Heart right ventricle (tissue), 16 donors: ENCODE measurements at regions of chr13 and their contacts with region 1.

Region 1: DNA sequence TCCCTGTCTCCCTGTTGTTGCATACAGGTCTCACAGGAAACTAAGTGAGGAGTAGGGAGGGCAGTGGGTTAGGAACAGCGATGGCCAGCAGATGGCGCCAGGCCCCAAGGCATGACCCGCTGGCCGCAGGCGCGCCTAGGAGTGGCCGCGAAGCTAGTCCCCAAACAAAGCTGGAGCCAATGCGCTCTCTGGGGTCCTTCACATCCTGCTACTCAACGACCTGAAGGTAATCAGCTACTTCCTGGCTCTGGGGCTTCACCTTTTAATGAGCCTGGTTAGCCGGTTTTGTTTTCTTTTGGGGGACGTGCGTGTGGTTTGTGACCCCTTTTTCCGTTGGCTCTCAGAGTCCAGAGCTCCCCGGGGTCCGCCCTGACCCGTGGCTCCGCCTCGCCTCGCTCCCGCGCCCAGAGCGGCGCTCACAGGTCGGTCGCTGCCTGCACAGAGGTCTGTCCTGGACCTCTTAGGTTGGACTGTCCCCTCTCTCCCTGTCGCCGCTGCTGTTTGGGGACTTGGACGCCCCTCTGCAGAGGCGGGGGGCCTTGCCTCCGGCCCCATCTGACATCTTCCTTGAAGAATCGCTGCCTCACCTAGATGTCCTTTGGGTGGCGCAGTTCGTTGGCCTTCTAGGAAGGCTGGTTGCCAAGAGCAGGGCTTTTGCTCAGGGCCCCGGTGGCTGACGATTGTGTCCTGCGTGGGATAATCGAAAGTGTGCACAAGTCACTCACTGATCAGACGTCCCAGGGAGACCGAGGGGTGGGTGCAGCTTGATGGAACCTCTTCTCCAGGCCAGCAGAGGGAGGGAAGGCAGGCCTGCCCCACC is 62.1 kb upstream of the GTF3A start:
- DNase-seq: peak; percentile 82 to 88
- ATAC-seq: peak; percentile 92 to 97 (median 95)
- H3K4me3 ChIP-seq: peak overlapping the region; percentile 29 to 61 (median 51)
- H3K27ac ChIP-seq: no peak overlapping the region
- H3K4me1 ChIP-seq: peaks cover 0 to 10% (median 5%) of the 10 kb centered on the region in 9 donors
- H3K27me3 ChIP-seq: peaks cover 0 to 17% (median 6%) of the 10 kb centered on the region in 7 donors
- CTCF ChIP-seq: peak; percentile 87 to 97 (median 95)

Region 2: DNA sequence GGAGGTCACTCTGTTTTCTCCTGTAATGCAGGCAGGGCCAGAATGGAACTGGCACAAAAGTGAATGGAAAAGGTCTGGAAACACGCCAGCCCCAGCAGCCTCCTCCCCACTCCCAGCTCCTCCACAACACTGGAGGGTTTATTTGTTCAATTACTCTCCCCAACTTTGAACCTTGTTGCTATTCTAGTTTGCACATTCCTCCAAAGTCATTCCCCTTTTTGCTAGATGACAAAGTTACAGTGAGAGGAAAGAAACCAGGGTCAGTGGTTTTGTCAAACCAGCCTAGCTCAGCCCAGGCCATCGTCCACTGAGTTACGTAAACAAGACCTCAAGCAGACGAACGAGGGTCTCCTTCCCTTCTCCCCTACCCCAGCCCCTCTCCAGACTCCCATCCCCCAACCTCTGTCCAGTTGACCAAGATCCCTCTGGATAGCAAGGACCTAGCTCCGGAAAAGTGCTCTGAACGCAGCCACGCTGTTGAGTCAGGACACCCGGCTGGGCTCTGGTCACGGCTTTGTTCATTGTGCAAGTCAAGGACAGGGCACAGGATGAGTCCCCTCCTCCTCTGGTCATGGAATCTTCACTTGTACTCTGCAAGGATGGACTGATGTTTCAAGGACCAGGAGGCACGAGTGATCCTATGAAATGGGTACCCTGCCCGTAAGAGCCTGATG is 370.6 kb before region 1 on chr13:
- intact Hi-C with region 1: loop called in 3 of 10 experiments (anchors 2 to 5 kb)
- DNase-seq: no peak
- ATAC-seq: peak in 5 of 8 donors; percentile 27 to 60 (median 36)
- H3K4me3 ChIP-seq: no peak overlapping the region
- H3K27ac ChIP-seq: no peak overlapping the region
- H3K4me1 ChIP-seq: peaks cover 0 to 20% (median 0%) of the 10 kb centered on the region in 9 donors
- H3K27me3 ChIP-seq: no peaks in the 10 kb centered on the region
- CTCF ChIP-seq: no peak

Region 3: GRCh38 chr13:27293873-27294515 is 68.3 kb before region 1 on chr13:
- intact Hi-C with region 1: loop called in 1 of 10 experiments (anchors 10 kb)
- DNase-seq: no peak
- ATAC-seq: peak in 1 of 8 donors; percentile 27
- H3K4me3 ChIP-seq: no peak overlapping the region
- H3K27ac ChIP-seq: no peak overlapping the region
- H3K4me1 ChIP-seq: peaks cover 0 to 6% (median 0%) of the 10 kb centered on the region in 9 donors
- H3K27me3 ChIP-seq: peaks cover 0 to 10% (median 0%) of the 10 kb centered on the region in 7 donors
- CTCF ChIP-seq: no peak

Region 4: GRCh38 chr13:27678306-27679040 is 316.2 kb after region 1 on chr13:
- intact Hi-C with region 1: no loop called
- DNase-seq: no peak
- ATAC-seq: no peak
- H3K4me3 ChIP-seq: no peak overlapping the region
- H3K27ac ChIP-seq: no peak overlapping the region
- H3K4me1 ChIP-seq: peaks cover 0 to 5% (median 0%) of the 10 kb centered on the region in 9 donors
- H3K27me3 ChIP-seq: peaks cover 0 to 4% (median 0%) of the 10 kb centered on the region in 7 donors
- CTCF ChIP-seq: no peak

Region 5: GRCh38 chr13:27826379-27827353 is 464.4 kb after region 1 on chr13:
- intact Hi-C with region 1: loop called in 4 of 10 experiments (anchors 1 to 5 kb)
- DNase-seq: peak; percentile 74 to 76
- ATAC-seq: peak; percentile 87 to 95 (median 91)
- H3K4me3 ChIP-seq: peak overlapping the region in 7 of 10 donors; percentile 4 to 37 (median 23)
- H3K27ac ChIP-seq: no peak overlapping the region
- H3K4me1 ChIP-seq: peaks cover 0 to 18% (median 8%) of the 10 kb centered on the region in 9 donors
- H3K27me3 ChIP-seq: peaks cover 0 to 100% (median 89%) of the 10 kb centered on the region in 7 donors
- CTCF ChIP-seq: peak; percentile 82 to 97 (median 92)

Region 6: GRCh38 chr13:27985600-27985999 is 623.3 kb after region 1 on chr13:
- intact Hi-C with region 1: loop called in 9 of 10 experiments (anchors 1 to 5 kb)
- DNase-seq: no peak
- ATAC-seq: no peak
- H3K4me3 ChIP-seq: no peak overlapping the region
- H3K27ac ChIP-seq: no peak overlapping the region
- H3K4me1 ChIP-seq: peaks cover 0 to 2% (median under 1%) of the 10 kb centered on the region in 9 donors
- H3K27me3 ChIP-seq: peaks cover 18 to 93% (median 79%) of the 10 kb centered on the region in 7 donors
- CTCF ChIP-seq: no peak

Region 7: GRCh38 chr13:28251466-28251865 is 889.2 kb after region 1 on chr13:
- intact Hi-C with region 1: no loop called
- DNase-seq: no peak
- ATAC-seq: no peak
- H3K4me3 ChIP-seq: no peak overlapping the region
- H3K27ac ChIP-seq: peak overlapping the region in 1 of 10 donors; percentile 41
- H3K4me1 ChIP-seq: peaks cover 0 to 29% (median 4%) of the 10 kb centered on the region in 9 donors
- H3K27me3 ChIP-seq: no peaks in the 10 kb centered on the region
- CTCF ChIP-seq: no peak